Activated CD8-positive, alpha-beta T cell treated with anti-CD3 and anti-CD28 coated beads for 36 hours (primary cell): ENCODE measurements at regions of chr13 and their contacts with region 1.

Region 1: GRCh38 chr13:76903544-76904162 is 17.4 kb upstream of the KCTD12 start:
- DNase-seq: peak; percentile 83
- ATAC-seq: peak; percentile 90
- H3K4me3 Mint-ChIP-seq: no peak overlapping the region
- H3K27ac Mint-ChIP-seq: no peak overlapping the region
- H3K4me1 Mint-ChIP-seq: no peaks in the 10 kb centered on the region
- H3K27me3 Mint-ChIP-seq: peaks cover 6% of the 10 kb centered on the region
- CTCF ChIP-seq: peak; percentile 98

Region 2: GRCh38 chr13:75876360-75877050 is 1027.1 kb before region 1 on chr13:
- CTCF ChIA-PET with region 1: interaction called, 12 read pairs
- POLR2A ChIA-PET with region 1: no interaction called
- intact Hi-C with region 1: loop called (anchors 10 kb)
- DNase-seq: peak; percentile 73
- ATAC-seq: peak; percentile 94
- H3K4me3 Mint-ChIP-seq: no peak overlapping the region
- H3K27ac Mint-ChIP-seq: no peak overlapping the region
- H3K4me1 Mint-ChIP-seq: peaks cover 3% of the 10 kb centered on the region
- H3K27me3 Mint-ChIP-seq: peaks cover 3% of the 10 kb centered on the region
- CTCF ChIP-seq: peak; percentile 90

Region 3: DNA sequence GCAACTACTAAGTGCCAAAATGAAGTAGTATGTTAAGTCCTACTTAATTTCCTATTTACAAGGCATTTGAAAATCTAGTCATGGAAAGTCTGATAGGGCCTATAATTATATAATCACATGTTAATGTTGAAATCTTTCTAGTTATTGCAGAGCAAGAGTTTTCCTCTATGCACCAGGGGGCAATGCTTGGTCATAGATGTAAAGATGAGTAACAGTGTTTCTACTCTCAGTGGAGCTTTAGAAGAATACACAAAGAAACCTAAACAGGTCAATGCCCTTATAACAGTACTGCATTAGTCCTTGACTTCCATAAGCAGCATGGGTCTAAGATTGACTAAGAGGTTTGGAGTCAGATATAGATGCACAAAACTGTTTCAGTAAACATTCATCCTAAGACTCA is 236.1 kb before region 1 on chr13:
- CTCF ChIA-PET with region 1: interaction called, 38 read pairs
- POLR2A ChIA-PET with region 1: no interaction called
- intact Hi-C with region 1: loop called (anchors 5 kb)
- DNase-seq: peak; percentile 23
- ATAC-seq: peak; percentile 72
- H3K4me3 Mint-ChIP-seq: no peak overlapping the region
- H3K27ac Mint-ChIP-seq: no peak overlapping the region
- H3K4me1 Mint-ChIP-seq: peaks cover 3% of the 10 kb centered on the region
- H3K27me3 Mint-ChIP-seq: no peaks in the 10 kb centered on the region
- CTCF ChIP-seq: no peak

Region 4: GRCh38 chr13:76822698-76823267 is 80.9 kb before region 1 on chr13:
- CTCF ChIA-PET with region 1: interaction called, 15 read pairs
- POLR2A ChIA-PET with region 1: no interaction called
- intact Hi-C with region 1: loop called (anchors 5 kb)
- DNase-seq: no peak
- ATAC-seq: peak; percentile 58
- H3K4me3 Mint-ChIP-seq: no peak overlapping the region
- H3K27ac Mint-ChIP-seq: no peak overlapping the region
- H3K4me1 Mint-ChIP-seq: no peaks in the 10 kb centered on the region
- H3K27me3 Mint-ChIP-seq: peaks cover 5% of the 10 kb centered on the region
- CTCF ChIP-seq: no peak

Region 5: GRCh38 chr13:76886292-76887075 is 17.2 kb before region 1 on chr13 and contains the start of gene KCTD12:
- CTCF ChIA-PET with region 1: interaction called, 28 read pairs
- POLR2A ChIA-PET with region 1: interaction called, 7 read pairs
- intact Hi-C with region 1: no loop called
- DNase-seq: peak; percentile 78
- ATAC-seq: peak; percentile 78
- H3K4me3 Mint-ChIP-seq: peak within 1 kb of the TSS; percentile 89
- H3K27ac Mint-ChIP-seq: peak within 1 kb of the TSS; percentile 86
- H3K4me1 Mint-ChIP-seq: peaks cover 17% of the 10 kb centered on the region
- H3K27me3 Mint-ChIP-seq: peaks cover 19% of the 10 kb centered on the region
- CTCF ChIP-seq: no peak
- total RNA-seq, gene KCTD12: 14.3 to 14.8 TPM

Region 6: GRCh38 chr13:76921516-76921915 is 17.9 kb after region 1 on chr13:
- CTCF ChIA-PET with region 1: interaction called, 11 read pairs
- POLR2A ChIA-PET with region 1: interaction called, 3 read pairs
- intact Hi-C with region 1: no loop called
- DNase-seq: no peak
- ATAC-seq: no peak
- H3K4me3 Mint-ChIP-seq: no peak overlapping the region
- H3K27ac Mint-ChIP-seq: no peak overlapping the region
- H3K4me1 Mint-ChIP-seq: no peaks in the 10 kb centered on the region
- H3K27me3 Mint-ChIP-seq: peaks cover 10% of the 10 kb centered on the region
- CTCF ChIP-seq: no peak

Region 7: GRCh38 chr13:76980075-76980718 is 76.5 kb after region 1 on chr13:
- CTCF ChIA-PET with region 1: interaction called, 15 read pairs
- POLR2A ChIA-PET with region 1: no interaction called
- intact Hi-C with region 1: no loop called
- DNase-seq: peak; percentile 89
- ATAC-seq: peak; percentile 100
- H3K4me3 Mint-ChIP-seq: peak overlapping the region; percentile 58
- H3K27ac Mint-ChIP-seq: no peak overlapping the region
- H3K4me1 Mint-ChIP-seq: peaks cover 8% of the 10 kb centered on the region
- H3K27me3 Mint-ChIP-seq: peaks cover 28% of the 10 kb centered on the region
- CTCF ChIP-seq: peak; percentile 95